Activated CD4-positive, alpha-beta T cell treated with anti-CD3 and anti-CD28 coated beads for 36 hours (primary cell): ENCODE measurements at regions of chr2 and their contacts with region 1.

Region 1: DNA sequence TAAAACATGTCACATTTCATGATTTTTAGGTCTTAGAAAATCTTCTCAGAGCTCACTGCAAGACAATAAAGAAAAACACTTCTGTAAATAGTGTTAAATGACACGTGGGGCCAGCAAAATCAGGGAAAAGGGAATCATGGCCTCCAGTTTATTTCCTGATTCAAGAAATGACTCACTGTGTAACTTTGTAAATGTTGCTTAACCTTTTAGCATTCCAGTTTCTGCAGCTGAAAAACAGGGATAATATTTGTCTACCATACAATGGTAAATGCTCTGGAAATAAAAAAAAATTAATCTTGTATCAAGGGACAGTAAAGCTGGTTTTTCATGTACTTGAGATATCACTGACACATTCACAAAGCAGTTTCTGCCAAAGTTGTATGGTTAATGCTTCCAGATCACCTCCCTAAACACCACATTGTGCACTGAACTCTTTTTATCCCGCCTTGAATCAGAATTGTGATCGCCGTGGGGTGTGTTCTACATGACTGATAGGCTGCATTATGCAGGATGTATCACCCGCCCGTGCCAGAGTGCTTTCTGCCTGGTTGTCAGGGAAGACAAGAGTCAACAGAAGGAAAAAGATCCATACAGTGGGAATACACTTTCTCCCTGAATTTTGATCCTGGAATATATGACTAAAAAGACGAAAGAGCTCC is 238.8 kb downstream of the IKZF2 start:
- DNase-seq: no peak
- ATAC-seq: no peak
- H3K4me3 Mint-ChIP-seq: no peak overlapping the region
- H3K27ac Mint-ChIP-seq: no peak overlapping the region
- H3K4me1 Mint-ChIP-seq: peaks cover 26% of the 10 kb centered on the region
- H3K27me3 Mint-ChIP-seq: peaks cover 12% of the 10 kb centered on the region

Region 2: GRCh38 chr2:212928681-212929080 is 16.1 kb after region 1 on chr2:
- CTCF ChIA-PET with region 1: interaction called, 3 read pairs
- POLR2A ChIA-PET with region 1: interaction called, 3 read pairs
- intact Hi-C with region 1: loop called in 1 of 2 experiments (anchors 2 kb)
- DNase-seq: no peak
- ATAC-seq: no peak
- H3K4me3 Mint-ChIP-seq: no peak overlapping the region
- H3K27ac Mint-ChIP-seq: no peak overlapping the region
- H3K4me1 Mint-ChIP-seq: peaks cover 23% of the 10 kb centered on the region
- H3K27me3 Mint-ChIP-seq: peaks cover 3% of the 10 kb centered on the region

Region 3: GRCh38 chr2:212958757-212959295 is 46.3 kb after region 1 on chr2:
- CTCF ChIA-PET with region 1: no interaction called
- POLR2A ChIA-PET with region 1: interaction called, 3 read pairs
- intact Hi-C with region 1: loop called in 1 of 2 experiments (anchors 5 kb)
- DNase-seq: no peak
- ATAC-seq: no peak
- H3K4me3 Mint-ChIP-seq: no peak overlapping the region
- H3K27ac Mint-ChIP-seq: peak overlapping the region; percentile 62
- H3K4me1 Mint-ChIP-seq: peaks cover 47% of the 10 kb centered on the region
- H3K27me3 Mint-ChIP-seq: no peaks in the 10 kb centered on the region